Sigmoid colon (tissue), 7 donors: ENCODE measurements at regions of chr14 and their contacts with region 1.

Region 1: GRCh38 chr14:99563233-99564129 is 40.5 kb downstream of the CCDC85C start:
- DNase-seq: peak; percentile 96
- H3K4me3 ChIP-seq: no peak overlapping the region
- H3K27ac ChIP-seq: peak overlapping the region; percentile 81 to 94 (median 88)
- H3K4me1 ChIP-seq: peaks cover 0 to 98% (median 96%) of the 10 kb centered on the region in 4 donors
- H3K27me3 ChIP-seq: no peaks in the 10 kb centered on the region
- CTCF ChIP-seq: peak; percentile 10 to 42 (median 29)
- EP300 ChIP-seq: peak in 2 of 4 donors; percentile 74 to 76
- POLR2A ChIP-seq: no peak

Region 2: DNA sequence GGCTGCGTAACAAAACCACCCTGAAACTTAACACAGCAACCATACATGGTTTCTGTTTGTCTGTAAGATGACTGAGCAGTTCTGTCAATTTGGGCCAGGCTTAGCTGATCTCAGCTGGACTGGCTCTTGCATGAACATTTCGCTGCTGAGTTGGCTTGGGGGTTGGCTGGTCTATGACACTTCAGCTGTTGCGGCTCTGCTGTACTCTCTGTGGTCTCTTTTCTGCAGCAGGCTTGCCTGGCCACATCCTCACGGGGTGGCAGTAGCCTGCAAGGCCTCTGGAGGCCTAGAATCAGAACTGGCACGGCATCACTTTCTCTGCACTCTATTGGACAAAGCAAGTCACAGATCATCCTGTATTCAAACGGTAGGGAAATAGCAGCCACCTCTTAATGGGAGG is 507.7 kb before region 1 on chr14:
- intact Hi-C with region 1: no loop called
- DNase-seq: no peak
- H3K4me3 ChIP-seq: no peak overlapping the region
- H3K27ac ChIP-seq: no peak overlapping the region
- H3K4me1 ChIP-seq: no peaks in the 10 kb centered on the region
- H3K27me3 ChIP-seq: no peaks in the 10 kb centered on the region
- CTCF ChIP-seq: no peak
- EP300 ChIP-seq: no peak
- POLR2A ChIP-seq: no peak

Region 3: DNA sequence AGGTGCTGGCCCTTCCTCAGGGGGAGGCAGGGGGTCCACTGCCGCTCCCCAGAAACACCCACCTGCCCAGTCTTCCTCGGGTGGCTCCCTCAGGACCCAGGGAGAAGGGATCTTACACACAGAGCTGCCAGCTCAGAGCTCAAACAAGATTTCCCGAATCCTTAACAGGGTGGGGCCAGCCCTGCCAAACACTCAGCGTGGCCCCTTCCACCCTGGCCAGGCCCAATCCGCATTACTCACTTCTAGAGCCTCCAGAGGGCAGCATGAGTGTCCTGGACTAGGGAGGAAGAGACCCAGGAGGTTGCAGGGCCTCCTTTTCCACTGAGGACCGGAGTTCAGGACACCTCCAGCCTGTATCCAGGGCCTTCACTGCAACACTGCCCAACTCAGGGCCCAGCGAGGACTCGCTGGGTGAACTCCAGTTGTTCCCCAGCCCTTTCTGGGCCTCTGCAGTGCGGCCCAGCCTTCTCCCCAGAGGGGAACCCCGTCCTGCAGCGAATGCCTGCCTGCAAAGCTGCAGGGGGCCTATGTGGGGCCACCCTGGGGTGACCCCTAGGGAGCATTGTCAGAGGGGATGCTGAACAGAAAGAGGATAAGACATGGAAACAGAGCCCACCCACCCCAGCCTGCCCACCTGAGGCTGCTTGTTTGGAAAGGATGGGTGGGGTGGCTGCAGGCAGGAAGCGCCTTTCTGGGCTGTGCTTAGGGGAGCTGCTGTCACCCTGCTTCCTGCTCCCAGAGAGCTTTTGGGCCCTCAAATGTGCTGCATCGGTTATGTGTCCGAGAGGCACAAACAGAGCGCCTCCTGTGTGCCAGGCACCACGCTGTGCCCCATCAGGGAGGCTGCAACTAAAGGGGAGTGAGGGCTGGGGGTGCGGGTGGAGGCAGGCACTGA is 38.4 kb before region 1 on chr14:
- intact Hi-C with region 1: loop called (anchors 5 kb)
- DNase-seq: no peak
- H3K4me3 ChIP-seq: no peak overlapping the region
- H3K27ac ChIP-seq: peak overlapping the region; percentile 82 to 90 (median 84)
- H3K4me1 ChIP-seq: peaks cover 0 to 71% (median 69%) of the 10 kb centered on the region in 4 donors
- H3K27me3 ChIP-seq: no peaks in the 10 kb centered on the region
- CTCF ChIP-seq: peak in 1 of 4 experiments; percentile 40
- EP300 ChIP-seq: no peak
- POLR2A ChIP-seq: no peak

Region 4: DNA sequence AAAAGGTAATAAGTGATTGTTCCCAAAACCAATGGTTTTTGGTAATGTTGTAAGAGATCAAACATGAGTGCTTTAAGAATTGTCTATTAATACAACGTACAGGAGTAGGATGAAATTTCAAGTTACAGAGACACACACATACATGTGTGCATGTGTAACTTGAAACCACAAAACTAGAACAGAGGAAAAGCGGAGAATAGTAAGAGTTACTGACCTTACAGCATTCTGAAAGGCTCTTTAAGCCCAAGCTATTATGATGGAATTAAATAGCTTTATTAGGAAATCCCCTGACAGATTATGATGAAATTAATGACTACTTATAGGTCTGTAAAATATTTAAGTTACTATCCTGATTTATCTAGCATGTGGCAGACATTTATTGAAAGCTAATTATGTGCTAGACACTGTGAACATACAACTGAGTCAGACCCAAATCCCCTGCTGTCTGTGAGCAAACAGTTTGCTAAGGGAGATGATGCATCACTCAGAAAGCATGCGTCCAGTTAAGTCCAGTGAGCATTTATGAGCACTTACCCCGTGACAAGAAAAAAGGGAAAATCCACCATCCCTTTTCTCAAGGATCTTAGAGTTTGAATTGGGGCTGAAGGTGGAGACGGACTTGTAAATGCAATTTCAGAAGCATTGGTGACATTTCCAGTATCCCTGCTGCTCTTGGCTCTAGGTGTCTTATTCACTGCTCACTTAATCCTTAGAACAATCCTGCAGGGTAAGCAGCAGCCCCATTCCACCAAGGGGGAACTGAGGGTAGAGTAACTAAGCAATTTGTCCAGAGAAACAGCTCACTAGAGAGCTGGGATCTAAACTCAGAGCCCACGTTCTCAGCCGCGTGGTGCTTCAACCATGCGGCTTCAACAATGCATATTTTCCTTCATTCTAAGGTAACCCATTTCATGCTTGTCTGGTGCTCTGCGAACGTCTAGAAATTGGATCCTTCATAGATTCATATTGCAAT is 347.1 kb after region 1 on chr14:
- intact Hi-C with region 1: no loop called
- DNase-seq: no peak
- H3K4me3 ChIP-seq: no peak overlapping the region
- H3K27ac ChIP-seq: no peak overlapping the region
- H3K4me1 ChIP-seq: no peaks in the 10 kb centered on the region
- H3K27me3 ChIP-seq: no peaks in the 10 kb centered on the region
- CTCF ChIP-seq: no peak
- EP300 ChIP-seq: no peak
- POLR2A ChIP-seq: no peak